CD8-positive, alpha-beta memory T cell (primary cell): ENCODE measurements at regions of chr17 and their contacts with region 1.

Region 1: DNA sequence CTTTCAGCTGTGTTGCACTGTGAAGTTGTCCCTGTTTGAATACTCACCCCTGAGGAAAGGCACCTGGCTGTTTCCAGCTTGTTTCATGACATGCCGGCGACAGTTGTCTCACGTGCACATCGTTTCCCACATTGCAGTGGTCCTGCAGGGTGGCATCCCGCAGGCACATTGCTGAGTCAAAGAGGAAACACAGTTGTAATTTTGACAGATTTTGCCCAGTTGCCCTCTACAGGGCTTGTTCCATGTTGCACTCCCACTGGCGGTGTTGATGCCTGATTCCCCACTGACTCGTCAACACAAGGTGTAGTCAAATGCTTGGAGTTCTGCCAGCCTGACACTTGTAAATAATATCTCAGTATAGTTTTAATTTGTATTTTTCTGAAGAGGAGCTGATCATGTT is 23.8 kb downstream of the EPN2 start:
- DNase-seq: no peak
- H3K4me3 ChIP-seq: no peak overlapping the region
- H3K4me3 Mint-ChIP-seq: no peak overlapping the region
- H3K27ac ChIP-seq: no peak overlapping the region
- H3K27ac Mint-ChIP-seq: no peak overlapping the region
- H3K4me1 ChIP-seq: no peaks in the 10 kb centered on the region
- H3K4me1 Mint-ChIP-seq: no peaks in the 10 kb centered on the region
- H3K27me3 ChIP-seq: no peaks in the 10 kb centered on the region
- H3K27me3 Mint-ChIP-seq: peaks cover 0 to 13% of the 10 kb centered on the region in 2 donors

Region 2: GRCh38 chr17:19248928-19249574 is 11.9 kb before region 1 on chr17:
- CTCF ChIA-PET with region 1: no interaction called
- POLR2A ChIA-PET with region 1: no interaction called
- DNase-seq: no peak
- H3K4me3 ChIP-seq: no peak overlapping the region
- H3K4me3 Mint-ChIP-seq: peak overlapping the region in 1 of 7 donors; percentile 6
- H3K27ac ChIP-seq: no peak overlapping the region
- H3K27ac Mint-ChIP-seq: peak overlapping the region in 2 of 8 donors; percentile 38 to 50
- H3K4me1 ChIP-seq: no peaks in the 10 kb centered on the region
- H3K4me1 Mint-ChIP-seq: peaks cover 0 to 3% (median 0%) of the 10 kb centered on the region in 3 donors
- H3K27me3 ChIP-seq: no peaks in the 10 kb centered on the region
- H3K27me3 Mint-ChIP-seq: peaks cover 0 to 11% of the 10 kb centered on the region in 2 donors

Region 3: GRCh38 chr17:19278729-19279128 is 17.8 kb after region 1 on chr17:
- CTCF ChIA-PET with region 1: no interaction called
- POLR2A ChIA-PET with region 1: interaction called, 11 read pairs
- DNase-seq: no peak
- H3K4me3 ChIP-seq: no peak overlapping the region
- H3K4me3 Mint-ChIP-seq: no peak overlapping the region
- H3K27ac ChIP-seq: no peak overlapping the region
- H3K27ac Mint-ChIP-seq: no peak overlapping the region
- H3K4me1 ChIP-seq: peaks cover 1% of the 10 kb centered on the region
- H3K4me1 Mint-ChIP-seq: peaks cover 2 to 7% (median 4%) of the 10 kb centered on the region in 3 donors
- H3K27me3 ChIP-seq: no peaks in the 10 kb centered on the region
- H3K27me3 Mint-ChIP-seq: peaks cover 0 to 3% of the 10 kb centered on the region in 2 donors